BJ (cell line): ENCODE measurements at regions of chr6 and their contacts with region 1.

Region 1: GRCh38 chr6:12395898-12396297 is 105.7 kb downstream of the EDN1 start:
- DNase-seq: no peak
- H3K4me3 ChIP-seq: no peak overlapping the region
- H3K27me3 ChIP-seq: no peaks in the 10 kb centered on the region
- CTCF ChIP-seq: peak; percentile 48

Region 2: DNA sequence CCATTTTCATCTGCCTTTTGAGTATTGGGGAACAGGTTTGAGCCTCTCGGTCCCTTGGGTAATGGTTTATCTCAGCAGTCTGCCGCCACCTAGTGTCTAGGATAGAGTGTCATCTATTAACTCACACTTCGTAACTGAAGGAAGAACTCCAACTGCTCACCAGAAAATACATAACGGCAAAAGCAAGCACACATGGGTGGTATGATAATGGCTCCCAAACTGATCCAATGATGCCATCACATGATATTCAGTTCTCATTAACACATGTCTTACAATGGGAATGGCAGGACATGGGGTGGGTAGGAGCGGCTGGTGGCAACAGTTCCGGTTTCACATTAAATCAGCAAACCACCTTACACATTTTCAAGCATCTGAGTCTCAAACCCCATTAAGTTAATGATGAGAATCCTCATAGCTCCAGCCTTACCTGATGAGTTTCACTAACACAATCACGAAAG is 210.0 kb after region 1 on chr6:
- CTCF ChIA-PET with region 1: interaction called, 19 read pairs
- POLR2A ChIA-PET with region 1: no interaction called
- DNase-seq: no peak
- H3K4me3 ChIP-seq: no peak overlapping the region
- H3K27me3 ChIP-seq: no peaks in the 10 kb centered on the region
- CTCF ChIP-seq: peak; percentile 82